ENCODE measurements at regions of chr12 and their contacts with region 1.

Region 1: GRCh38 chr12:32843528-32844095 is 53.0 kb downstream of the PKP2 start:
- DNase-seq: no peak
- H3K4me3 ChIP-seq: no peak overlapping the region
- H3K27ac ChIP-seq: peak overlapping the region in 1 of 2 experiments; percentile 85; a peak in 2 of 4 replicates
- H3K4me1 ChIP-seq: peaks cover 0 to 5% of the 10 kb centered on the region in 2 experiments; a peak in 2 of 4 replicates
- H3K27me3 ChIP-seq: no peaks in the 10 kb centered on the region
- CTCF ChIP-seq: no peak
- EP300 ChIP-seq: no peak
- RAD21 ChIP-seq: no peak

Region 2: DNA sequence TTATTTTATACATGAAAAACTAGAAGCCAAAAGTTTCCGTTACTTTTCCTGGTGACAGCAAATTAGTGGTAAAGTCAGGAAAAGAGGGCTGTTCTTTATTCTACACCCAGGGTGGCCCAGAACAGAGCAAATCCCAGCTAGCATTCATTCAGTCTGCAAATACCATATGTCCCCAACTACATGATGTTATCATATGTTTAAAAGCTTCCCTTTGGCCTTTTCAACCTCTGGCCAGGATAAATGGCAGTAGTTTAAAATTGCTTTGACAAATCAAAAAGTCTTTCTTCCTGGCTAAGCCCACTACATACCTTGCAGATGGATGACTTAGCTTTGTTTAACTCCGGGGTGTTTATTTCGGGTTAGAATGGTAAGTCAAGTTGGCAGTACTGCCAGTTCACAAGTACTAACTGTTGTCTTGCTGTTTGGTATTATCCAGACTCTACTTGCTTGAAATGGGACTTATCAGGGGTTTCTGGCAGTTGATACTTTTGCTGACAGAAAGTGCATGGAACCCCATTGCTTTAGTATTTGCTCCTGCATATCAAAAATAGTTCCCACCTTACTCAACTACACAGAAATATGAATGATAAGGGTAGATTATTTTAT is 16.7 kb before region 1 on chr12:
- CTCF ChIA-PET with region 1: interaction called, 13 read pairs
- POLR2A ChIA-PET with region 1: interaction called, 3 read pairs
- DNase-seq: peak; percentile 65
- H3K4me3 ChIP-seq: no peak overlapping the region; a peak in 1 of 4 replicates
- H3K27ac ChIP-seq: peak overlapping the region in 1 of 2 experiments; percentile 95; a peak in 2 of 4 replicates
- H3K4me1 ChIP-seq: peaks cover 0 to 18% of the 10 kb centered on the region in 2 experiments; a peak in 2 of 4 replicates
- H3K27me3 ChIP-seq: no peaks in the 10 kb centered on the region
- CTCF ChIP-seq: no peak
- EP300 ChIP-seq: peak in 1 of 2 experiments; percentile 90; a peak in 2 of 4 replicates
- RAD21 ChIP-seq: peak; percentile 8; the same call in 1 of the 2 replicates

Measured in SK-N-SH (cell line).